ENCODE measurements at regions of chr11 and their contacts with region 1.

Region 1: GRCh38 chr11:1772270-1773130 is 8.8 kb upstream of the CTSD start:
- DNase-seq: peak; percentile 75
- H3K4me3 ChIP-seq: no peak overlapping the region
- CTCF ChIP-seq: no peak

Region 2: GRCh38 chr11:1706634-1707400 is 65.7 kb before region 1 on chr11:
- in situ Hi-C with region 1: loop called (anchors 10 kb)
- DNase-seq: no peak
- H3K4me3 ChIP-seq: no peak overlapping the region
- CTCF ChIP-seq: no peak

Region 3: DNA sequence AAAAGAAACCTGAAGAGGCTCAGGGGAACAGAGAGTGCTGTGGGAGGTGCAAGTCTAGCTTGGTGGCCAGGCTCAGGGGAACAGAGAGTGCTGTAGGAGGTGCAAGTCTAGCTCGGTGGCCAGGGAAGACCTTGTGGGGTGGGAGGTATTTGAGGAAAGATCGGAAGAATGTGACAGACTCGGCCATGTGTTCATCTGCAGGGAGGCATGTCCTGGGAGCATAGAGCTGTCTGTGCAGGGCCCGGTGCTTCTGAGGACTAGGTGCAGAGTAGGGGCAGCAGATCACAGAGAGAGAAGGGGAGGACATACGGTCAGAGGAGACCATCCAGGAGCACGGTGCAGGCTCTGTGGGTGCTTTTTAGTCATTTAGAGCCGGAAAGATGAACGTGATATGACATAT is 32.9 kb before region 1 on chr11:
- in situ Hi-C with region 1: loop called (anchors 5 kb)
- DNase-seq: no peak
- H3K4me3 ChIP-seq: no peak overlapping the region
- CTCF ChIP-seq: no peak